ENCODE measurements at regions of chr4 and their contacts with region 1.

Region 1: DNA sequence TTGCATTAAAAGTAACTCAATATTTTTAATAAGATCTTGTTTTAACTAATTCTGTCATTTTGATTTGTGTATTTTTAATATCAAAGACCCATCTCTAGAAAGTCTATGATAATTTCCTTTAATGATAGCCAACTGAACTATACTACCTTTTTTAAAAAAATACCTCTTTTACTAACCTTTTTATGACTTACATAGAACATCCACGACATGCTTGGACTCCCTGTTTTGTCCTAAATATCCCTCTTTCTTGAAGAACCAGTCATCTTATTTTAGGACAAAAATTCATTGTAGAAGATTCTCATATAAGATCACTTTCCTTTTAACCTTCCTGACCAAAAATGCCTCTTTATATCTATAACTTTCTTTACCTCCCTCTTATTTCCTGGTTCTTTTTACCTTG is 76.8 kb upstream of the GC start:
- DNase-seq: no peak
- ATAC-seq: no peak
- H3K4me3 ChIP-seq: no peak overlapping the region
- H3K27ac ChIP-seq: no peak overlapping the region
- H3K4me1 ChIP-seq: no peaks in the 10 kb centered on the region
- H3K27me3 ChIP-seq: no peaks in the 10 kb centered on the region
- CTCF ChIP-seq: no peak

Region 2: DNA sequence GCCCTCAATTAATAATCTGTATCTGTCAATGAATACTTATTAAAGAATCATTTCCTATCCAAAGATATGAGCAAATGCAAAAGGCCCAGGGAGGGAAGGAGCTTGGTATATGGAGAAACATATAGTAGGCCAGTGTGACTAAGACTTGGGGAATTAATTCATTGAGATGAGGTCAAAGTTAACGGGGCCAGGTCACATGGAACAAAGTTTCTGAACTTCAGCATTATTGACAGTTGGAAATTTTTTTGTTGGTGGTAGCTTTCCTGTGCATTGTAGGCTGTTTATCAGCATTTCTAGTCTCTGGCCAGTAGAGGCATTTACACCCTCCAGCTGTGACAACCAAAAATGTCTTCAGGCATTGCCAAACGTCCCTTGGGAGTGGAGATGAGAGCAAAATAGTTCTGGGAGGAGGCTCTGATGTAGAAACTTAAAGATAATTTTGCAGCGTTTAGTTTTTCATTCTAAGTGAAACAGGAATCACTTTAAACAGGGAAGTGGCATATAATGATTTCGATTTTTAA is 319.8 kb before region 1 on chr4:
- intact Hi-C with region 1: no loop called
- DNase-seq: no peak
- ATAC-seq: no peak
- H3K4me3 ChIP-seq: no peak overlapping the region
- H3K27ac ChIP-seq: no peak overlapping the region
- H3K4me1 ChIP-seq: no peaks in the 10 kb centered on the region
- H3K27me3 ChIP-seq: no peaks in the 10 kb centered on the region
- CTCF ChIP-seq: no peak

Region 3: GRCh38 chr4:71872767-71873415 is 12.2 kb after region 1 on chr4:
- intact Hi-C with region 1: loop called in 1 of 2 experiments (anchors 1 kb)
- DNase-seq: no peak
- ATAC-seq: no peak
- H3K4me3 ChIP-seq: no peak overlapping the region
- H3K27ac ChIP-seq: no peak overlapping the region
- H3K4me1 ChIP-seq: no peaks in the 10 kb centered on the region
- H3K27me3 ChIP-seq: no peaks in the 10 kb centered on the region
- CTCF ChIP-seq: no peak

Measured in psoas muscle (tissue), 8 donors.